ENCODE measurements at regions of chr6 and their contacts with region 1.

Region 1: DNA sequence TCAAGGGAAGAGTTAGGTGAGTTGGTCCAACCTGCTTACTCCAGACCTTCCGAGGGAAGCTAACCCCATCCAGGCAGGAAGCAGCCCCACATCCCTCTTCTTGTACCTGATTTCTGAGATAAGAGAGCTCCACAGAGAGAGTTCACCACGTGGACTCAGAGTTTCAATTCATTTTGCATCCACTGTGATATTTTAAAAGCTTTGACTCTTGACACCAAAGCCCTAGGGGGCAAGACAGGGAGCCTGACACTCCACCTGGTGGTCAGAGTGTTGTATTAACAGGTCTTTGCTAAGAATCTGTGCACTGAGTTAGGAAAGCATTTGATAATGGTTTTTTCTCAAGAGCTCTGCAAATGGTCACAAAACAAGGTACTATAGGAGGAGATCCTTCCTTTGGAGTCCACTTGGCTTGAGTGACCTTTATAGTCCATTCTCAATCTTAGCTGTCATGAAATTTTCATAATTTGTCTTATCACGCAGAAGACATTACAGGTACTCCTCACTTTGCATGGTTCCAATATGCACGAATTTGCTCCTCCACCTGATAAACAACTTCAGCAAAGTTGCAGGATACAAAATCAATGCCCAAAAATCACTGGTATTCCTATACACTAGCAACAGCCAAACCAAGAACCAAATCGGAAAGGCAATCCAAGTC is 56.2 kb upstream of the RIPOR2 start:
- DNase-seq: peak; percentile 75 to 89 (median 88)
- H3K4me3 ChIP-seq: peak overlapping the region in 1 of 7 experiments; percentile 8
- H3K27ac ChIP-seq: no peak overlapping the region
- H3K4me1 ChIP-seq: peaks cover 12 to 26% (median 22%) of the 10 kb centered on the region in 4 experiments
- H3K27me3 ChIP-seq: no peaks in the 10 kb centered on the region

Region 2: GRCh38 chr6:24867104-24867703 is 124.7 kb before region 1 on chr6:
- CTCF ChIA-PET with region 1: interaction called, 12 read pairs
- POLR2A ChIA-PET with region 1: no interaction called
- DNase-seq: peak in 1 of 3 donors; percentile 12
- H3K4me3 ChIP-seq: no peak overlapping the region
- H3K27ac ChIP-seq: no peak overlapping the region
- H3K4me1 ChIP-seq: peaks cover under 1 to 3% (median 3%) of the 10 kb centered on the region in 4 experiments
- H3K27me3 ChIP-seq: no peaks in the 10 kb centered on the region

Region 3: DNA sequence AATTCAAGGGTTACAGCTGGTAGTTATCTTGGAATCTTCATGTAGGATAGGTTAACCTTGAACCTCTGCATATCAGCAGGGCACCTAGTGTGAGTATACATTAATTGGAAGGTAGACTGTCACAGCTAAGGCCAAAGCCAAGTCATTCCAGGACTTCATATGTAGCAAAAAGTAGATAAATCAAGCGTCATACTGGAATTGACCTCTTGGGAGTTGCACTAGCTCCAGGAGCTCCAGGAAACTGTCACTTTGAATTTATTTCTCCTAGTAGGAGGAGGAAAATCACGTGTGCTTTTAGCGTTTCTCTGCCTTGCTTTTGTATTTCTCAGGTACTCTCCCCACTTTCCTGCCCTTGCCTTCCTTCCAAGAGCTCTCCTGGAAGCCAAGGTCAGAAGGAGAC is 86.5 kb before region 1 on chr6:
- CTCF ChIA-PET with region 1: interaction called, 43 read pairs
- POLR2A ChIA-PET with region 1: no interaction called
- DNase-seq: no peak
- H3K4me3 ChIP-seq: no peak overlapping the region
- H3K27ac ChIP-seq: no peak overlapping the region
- H3K4me1 ChIP-seq: peaks cover 12 to 37% (median 28%) of the 10 kb centered on the region in 4 experiments
- H3K27me3 ChIP-seq: no peaks in the 10 kb centered on the region

Region 4: GRCh38 chr6:24933868-24934401 is 58.0 kb before region 1 on chr6:
- CTCF ChIA-PET with region 1: interaction called, 39 read pairs
- POLR2A ChIA-PET with region 1: no interaction called
- DNase-seq: peak in 1 of 3 donors; percentile 35
- H3K4me3 ChIP-seq: peak overlapping the region in 2 of 7 experiments; percentile 19 to 72
- H3K27ac ChIP-seq: no peak overlapping the region
- H3K4me1 ChIP-seq: peaks cover 20 to 64% (median 33%) of the 10 kb centered on the region in 4 experiments
- H3K27me3 ChIP-seq: no peaks in the 10 kb centered on the region

Region 5: DNA sequence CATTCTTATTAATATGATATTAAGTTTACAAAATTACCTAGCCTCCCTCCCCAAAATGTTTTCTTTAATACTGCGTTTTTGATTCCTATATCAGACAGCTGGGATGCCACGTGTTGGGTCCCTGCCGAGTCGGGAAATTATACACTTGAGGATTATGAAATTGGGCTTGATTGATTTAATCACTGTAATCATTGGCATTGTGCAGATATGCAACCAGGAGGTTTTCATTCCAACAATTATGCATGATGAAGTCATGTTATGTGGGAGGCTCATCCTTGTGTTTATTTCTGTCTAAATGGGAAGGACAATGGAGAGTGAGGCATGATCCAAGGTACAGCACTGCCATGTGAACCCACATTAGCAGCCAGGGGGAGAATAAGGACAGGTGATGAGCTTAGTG is 25.6 kb before region 1 on chr6:
- CTCF ChIA-PET with region 1: interaction called, 12 read pairs
- POLR2A ChIA-PET with region 1: no interaction called
- DNase-seq: no peak
- H3K4me3 ChIP-seq: no peak overlapping the region
- H3K27ac ChIP-seq: no peak overlapping the region
- H3K4me1 ChIP-seq: peaks cover 0 to 22% (median 15%) of the 10 kb centered on the region in 4 experiments
- H3K27me3 ChIP-seq: no peaks in the 10 kb centered on the region

Region 6: DNA sequence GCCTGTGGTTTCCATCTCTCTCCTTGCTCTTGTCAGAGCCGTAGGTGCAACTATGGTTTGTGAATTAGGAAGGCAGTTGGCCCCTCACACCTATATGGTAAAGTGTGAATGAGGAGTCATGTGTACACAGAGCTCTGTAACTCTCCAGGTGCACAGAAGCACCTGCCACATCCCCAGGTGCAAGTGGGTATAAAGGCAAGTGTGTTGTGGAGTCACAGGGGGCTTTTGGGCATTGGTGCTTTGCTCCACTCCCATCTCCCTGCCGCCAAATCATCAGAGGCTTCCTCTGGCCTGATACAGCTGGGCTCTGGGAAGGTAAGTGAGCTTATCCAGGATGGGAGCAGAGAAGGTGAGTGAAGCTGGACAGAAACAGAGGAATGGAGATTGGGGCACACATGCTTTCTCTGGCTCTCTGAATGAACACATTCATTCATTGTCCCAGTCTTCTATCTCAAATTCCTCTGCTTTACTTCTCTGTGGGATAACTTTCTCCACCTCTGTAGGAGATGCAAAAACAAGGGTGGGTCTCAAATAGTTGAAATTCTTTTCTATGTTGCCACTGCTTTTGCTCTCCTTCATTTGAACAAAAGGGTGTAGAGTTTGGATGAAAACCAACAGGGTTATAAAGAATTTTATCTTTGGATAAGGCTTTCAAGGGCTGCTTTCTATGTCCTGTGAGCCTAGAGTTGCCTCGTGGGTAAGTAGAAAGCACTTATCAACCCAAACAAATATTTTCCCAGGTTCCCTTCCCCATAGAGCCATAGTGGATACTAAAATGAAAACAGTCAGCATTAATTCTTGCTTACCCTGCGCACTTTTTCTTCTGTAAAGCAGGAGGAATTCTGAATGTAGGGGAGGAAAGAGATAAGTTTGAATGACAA is 11.2 kb before region 1 on chr6:
- CTCF ChIA-PET with region 1: interaction called, 20 read pairs
- POLR2A ChIA-PET with region 1: no interaction called
- DNase-seq: no peak
- H3K4me3 ChIP-seq: no peak overlapping the region
- H3K27ac ChIP-seq: no peak overlapping the region
- H3K4me1 ChIP-seq: peaks cover 2 to 19% (median 8%) of the 10 kb centered on the region in 4 experiments
- H3K27me3 ChIP-seq: no peaks in the 10 kb centered on the region

Region 7: GRCh38 chr6:25017932-25018567 is 26.1 kb after region 1 on chr6:
- CTCF ChIA-PET with region 1: interaction called, 27 read pairs
- POLR2A ChIA-PET with region 1: interaction called, 3 read pairs
- DNase-seq: peak; percentile 80 to 92 (median 88)
- H3K4me3 ChIP-seq: no peak overlapping the region
- H3K27ac ChIP-seq: peak overlapping the region in 1 of 2 experiments; percentile 50
- H3K4me1 ChIP-seq: peaks cover 18 to 47% (median 22%) of the 10 kb centered on the region in 4 experiments
- H3K27me3 ChIP-seq: no peaks in the 10 kb centered on the region

Measured in common myeloid progenitor, CD34-positive (primary cell).